Aorta (tissue), 5 donors: ENCODE measurements at regions of chr1 and their contacts with region 1.

Region 1: GRCh38 chr1:159798893-159799292 is 3.3 kb upstream of the FCRL6 start:
- DNase-seq: peak; percentile 74 to 79
- ATAC-seq: peak; percentile 90
- H3K4me3 ChIP-seq: no peak overlapping the region
- H3K27ac ChIP-seq: no peak overlapping the region
- H3K4me1 ChIP-seq: no peaks in the 10 kb centered on the region
- H3K27me3 ChIP-seq: no peaks in the 10 kb centered on the region

Region 2: GRCh38 chr1:159247266-159247665 is 551.6 kb before region 1 on chr1:
- intact Hi-C with region 1: no loop called
- DNase-seq: no peak
- ATAC-seq: no peak
- H3K4me3 ChIP-seq: no peak overlapping the region
- H3K27ac ChIP-seq: no peak overlapping the region
- H3K4me1 ChIP-seq: no peaks in the 10 kb centered on the region
- H3K27me3 ChIP-seq: no peaks in the 10 kb centered on the region

Region 3: GRCh38 chr1:159705251-159705903 is 93.5 kb before region 1 on chr1:
- intact Hi-C with region 1: no loop called
- DNase-seq: no peak
- ATAC-seq: no peak
- H3K4me3 ChIP-seq: no peak overlapping the region
- H3K27ac ChIP-seq: no peak overlapping the region
- H3K4me1 ChIP-seq: no peaks in the 10 kb centered on the region
- H3K27me3 ChIP-seq: peaks cover 0 to 2% of the 10 kb centered on the region in 2 donors

Region 4: GRCh38 chr1:159854693-159855192 is 55.9 kb after region 1 on chr1:
- intact Hi-C with region 1: loop called in 1 of 2 experiments (anchors 5 kb)
- DNase-seq: peak; percentile 93
- ATAC-seq: peak; percentile 95
- H3K4me3 ChIP-seq: peak overlapping the region; percentile 38 to 87
- H3K27ac ChIP-seq: peak overlapping the region; percentile 16 to 61
- H3K4me1 ChIP-seq: no peaks in the 10 kb centered on the region
- H3K27me3 ChIP-seq: no peaks in the 10 kb centered on the region

Region 5: DNA sequence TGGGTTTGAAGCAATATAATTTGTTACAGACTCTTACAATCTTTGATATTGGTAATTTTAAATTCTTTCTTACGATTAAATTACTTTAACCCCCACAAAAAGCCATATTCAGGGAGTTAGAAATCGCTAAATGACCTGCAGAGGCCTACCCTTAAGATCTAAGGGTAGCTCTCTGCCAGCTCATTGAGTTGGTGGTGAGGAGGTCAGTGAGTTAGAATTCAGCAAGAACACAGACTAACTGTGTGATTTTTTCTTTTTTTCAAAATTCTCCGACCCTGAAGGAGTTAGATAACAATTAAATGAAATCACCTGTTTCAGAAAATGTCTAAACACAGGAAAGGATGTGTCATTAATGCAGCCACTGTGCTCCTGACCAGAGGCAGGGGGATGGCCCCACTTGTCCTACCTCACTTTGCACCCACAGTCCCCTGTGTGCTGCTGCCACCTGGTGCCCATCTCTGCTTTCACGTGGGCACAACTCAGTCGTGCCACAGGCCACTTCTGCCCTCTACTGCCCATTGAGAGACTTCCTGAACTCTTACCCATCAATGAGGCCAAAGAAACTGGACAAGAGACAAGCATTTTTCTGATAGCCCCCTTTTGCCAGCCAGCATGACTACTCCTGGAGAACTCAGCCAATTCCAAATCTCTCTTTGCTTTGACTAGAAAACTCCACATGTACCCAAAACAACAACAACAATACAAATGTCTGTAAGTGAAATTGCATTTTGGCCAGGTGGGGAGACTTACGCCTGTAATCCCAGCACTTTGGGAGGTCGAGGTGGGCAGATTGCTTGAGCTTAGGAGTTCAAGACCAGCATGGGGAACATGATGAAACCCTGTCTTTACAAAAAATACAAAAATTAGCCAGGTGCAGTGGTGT is 92.6 kb after region 1 on chr1:
- intact Hi-C with region 1: loop called (anchors 1 to 2 kb)
- DNase-seq: peak; percentile 91 to 94
- ATAC-seq: peak; percentile 92
- H3K4me3 ChIP-seq: no peak overlapping the region
- H3K27ac ChIP-seq: no peak overlapping the region
- H3K4me1 ChIP-seq: no peaks in the 10 kb centered on the region
- H3K27me3 ChIP-seq: no peaks in the 10 kb centered on the region

Region 6: GRCh38 chr1:159945483-159946241 is 146.8 kb after region 1 on chr1 and contains the start of gene IGSF9:
- intact Hi-C with region 1: loop called in 1 of 2 experiments (anchors 5 kb)
- DNase-seq: peak; percentile 86 to 94
- ATAC-seq: peak; percentile 90
- H3K4me3 ChIP-seq: peak within 1 kb of the TSS in 1 of 2 donors; percentile 6
- H3K27ac ChIP-seq: no peak within 1 kb of the TSS
- H3K4me1 ChIP-seq: no peaks in the 10 kb centered on the region
- H3K27me3 ChIP-seq: no peaks in the 10 kb centered on the region
- total RNA-seq, gene IGSF9: 0.30 TPM in 1 of 2 donors, not detected in the other

Region 7: GRCh38 chr1:160006312-160006940 is 207.5 kb after region 1 on chr1:
- intact Hi-C with region 1: loop called (anchors 2 to 5 kb)
- DNase-seq: peak; percentile 80 to 86
- ATAC-seq: no peak
- H3K4me3 ChIP-seq: no peak overlapping the region
- H3K27ac ChIP-seq: no peak overlapping the region
- H3K4me1 ChIP-seq: no peaks in the 10 kb centered on the region
- H3K27me3 ChIP-seq: no peaks in the 10 kb centered on the region